Activated CD4-positive, alpha-beta T cell treated with anti-CD3 and anti-CD28 coated beads, Interleukin-2, amount 10 ng/mL, durations not matched to agents 24 days and 14 days (primary cell): ENCODE measurements at regions of chr4 and their contacts with region 1.

Region 1: DNA sequence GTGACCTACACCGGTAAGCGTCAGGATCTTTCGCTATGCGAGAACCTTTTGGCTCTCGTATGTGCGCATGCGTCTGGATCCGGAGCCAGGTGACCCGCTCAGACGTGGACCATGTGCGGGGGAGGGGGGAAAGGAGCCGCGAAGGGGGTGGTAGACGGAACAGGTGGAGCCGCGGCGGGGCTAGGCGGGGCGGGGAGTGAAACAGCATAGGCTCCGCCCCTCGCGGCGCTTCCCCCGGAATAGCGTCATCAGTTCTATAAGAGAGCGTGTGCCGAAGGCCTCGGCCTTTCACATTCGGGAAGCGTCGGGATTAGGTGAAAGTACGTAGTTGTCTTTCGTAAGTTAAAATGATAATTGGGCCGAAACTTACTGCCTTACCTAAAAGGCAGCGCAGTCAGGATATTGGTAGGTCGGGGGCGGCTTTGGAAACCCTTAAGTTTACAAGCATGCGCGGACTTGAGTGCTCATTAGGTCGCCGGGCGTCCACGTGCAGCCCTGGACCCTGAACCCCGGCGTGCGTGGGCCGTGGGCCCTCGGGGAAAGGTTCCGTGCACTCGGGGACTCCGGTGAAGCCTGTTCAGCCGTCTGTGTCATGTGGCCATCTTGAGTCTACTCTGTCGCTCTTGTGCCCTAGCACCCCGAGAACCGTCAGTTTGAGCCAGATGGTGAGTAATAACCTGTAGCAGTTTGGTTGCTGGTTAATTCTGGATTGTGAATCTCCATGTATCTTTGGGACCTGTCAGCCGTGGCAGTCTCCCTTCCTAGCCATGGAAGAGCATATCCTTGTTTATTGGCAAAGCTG is 74.1 kb downstream of the PRSS12 start:
- DNase-seq: peak; percentile 98
- H3K4me3 Mint-ChIP-seq: peak overlapping the region; percentile 88
- H3K27ac Mint-ChIP-seq: peak overlapping the region; percentile 93
- H3K4me1 Mint-ChIP-seq: peaks cover 34% of the 10 kb centered on the region
- H3K27me3 Mint-ChIP-seq: no peaks in the 10 kb centered on the region

Region 2: GRCh38 chr4:118249890-118250289 is 28.8 kb before region 1 on chr4:
- intact Hi-C with region 1: no loop called
- DNase-seq: no peak
- H3K4me3 Mint-ChIP-seq: no peak overlapping the region
- H3K27ac Mint-ChIP-seq: no peak overlapping the region
- H3K4me1 Mint-ChIP-seq: no peaks in the 10 kb centered on the region
- H3K27me3 Mint-ChIP-seq: no peaks in the 10 kb centered on the region

Region 3: GRCh38 chr4:118352843-118353533 is 74.3 kb after region 1 on chr4 and contains the start of gene PRSS12:
- intact Hi-C with region 1: loop called (anchors 2 kb)
- DNase-seq: peak; percentile 89
- H3K4me3 Mint-ChIP-seq: peak within 1 kb of the TSS; percentile 81
- H3K27ac Mint-ChIP-seq: no peak within 1 kb of the TSS
- H3K4me1 Mint-ChIP-seq: peaks cover 10% of the 10 kb centered on the region
- H3K27me3 Mint-ChIP-seq: peaks cover 67% of the 10 kb centered on the region
- total RNA-seq, gene PRSS12: not detected in 2 replicates

Region 4: DNA sequence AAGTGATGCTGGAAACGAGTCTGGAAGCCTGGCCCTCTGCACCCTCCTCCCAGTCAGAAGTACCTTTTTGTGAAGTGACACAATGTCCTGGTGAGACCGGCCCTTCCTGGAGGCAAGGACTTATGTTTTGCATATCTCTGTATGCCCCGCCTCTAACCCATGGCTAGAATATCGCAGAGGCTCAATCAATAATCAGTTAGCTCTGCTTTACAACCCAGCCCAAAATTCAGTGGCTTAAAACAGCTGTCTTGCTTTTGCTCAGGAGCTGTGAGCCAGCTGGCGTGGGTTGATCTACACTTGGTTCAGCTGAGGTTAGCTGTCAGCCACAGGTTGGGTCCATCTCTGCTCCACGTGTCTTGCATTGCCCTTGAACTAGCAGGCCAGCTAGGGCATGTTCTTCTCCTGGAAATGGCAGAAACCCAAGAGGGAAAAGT is 307.7 kb after region 1 on chr4:
- intact Hi-C with region 1: loop called (anchors 5 kb)
- DNase-seq: no peak
- H3K4me3 Mint-ChIP-seq: no peak overlapping the region
- H3K27ac Mint-ChIP-seq: no peak overlapping the region
- H3K4me1 Mint-ChIP-seq: peaks cover 9% of the 10 kb centered on the region
- H3K27me3 Mint-ChIP-seq: peaks cover 9% of the 10 kb centered on the region

Region 5: DNA sequence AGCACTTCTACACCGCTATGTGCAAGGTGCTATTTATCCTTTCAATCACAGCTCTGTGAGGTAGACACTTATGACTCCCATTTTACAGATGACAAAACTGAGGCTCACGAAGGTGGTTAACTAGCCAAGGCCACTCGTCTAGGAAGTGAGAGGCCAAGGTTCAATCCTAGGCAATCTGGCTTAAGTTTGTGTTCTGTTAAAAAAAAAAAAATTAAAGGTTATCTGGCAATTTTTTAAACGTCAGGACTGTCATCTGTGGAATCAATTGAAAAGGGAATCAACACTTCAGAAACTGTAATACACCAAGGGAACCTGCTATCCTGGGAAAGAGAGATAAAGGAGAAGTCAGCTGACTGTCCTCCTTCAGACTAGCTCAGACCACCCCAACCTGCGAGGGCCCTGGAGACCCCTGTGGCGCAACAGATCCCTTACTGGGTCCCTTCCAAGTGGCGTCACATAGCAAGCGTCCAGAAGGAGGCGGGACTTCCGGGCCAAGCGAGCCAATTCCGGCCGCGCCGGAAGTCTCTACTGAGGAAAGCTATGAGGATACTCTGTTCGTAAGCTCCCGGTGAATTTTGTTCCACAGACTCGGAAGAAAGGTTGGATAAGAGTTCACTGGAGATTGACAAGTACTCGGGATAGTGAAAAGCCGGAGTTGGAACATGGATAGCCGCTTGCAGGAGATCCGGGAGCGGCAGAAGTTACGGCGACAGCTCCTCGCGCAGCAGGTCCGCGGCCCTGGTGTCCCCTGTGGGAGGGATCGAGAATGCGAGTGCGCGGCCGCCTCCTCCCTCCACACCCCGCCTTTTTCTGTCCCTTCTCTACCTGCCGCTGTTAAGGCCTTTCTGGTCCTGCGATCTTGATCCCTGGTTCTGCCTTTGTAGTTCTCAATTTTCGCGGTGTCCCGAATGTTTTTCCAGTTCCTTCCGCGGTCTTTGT is 406.5 kb after region 1 on chr4 and contains the start of gene METTL14:
- intact Hi-C with region 1: loop called (anchors 2 kb)
- DNase-seq: peak; percentile 96
- H3K4me3 Mint-ChIP-seq: peak within 1 kb of the TSS; percentile 98
- H3K27ac Mint-ChIP-seq: peak within 1 kb of the TSS; percentile 95
- H3K4me1 Mint-ChIP-seq: peaks cover 11% of the 10 kb centered on the region
- H3K27me3 Mint-ChIP-seq: peaks cover 2% of the 10 kb centered on the region
- total RNA-seq, gene METTL14: 50.2 and 51.9 TPM in 2 replicates

Region 6: GRCh38 chr4:118835571-118836300 is 557.1 kb after region 1 on chr4 and contains the start of gene SEC24D:
- intact Hi-C with region 1: loop called (anchors 5 kb)
- DNase-seq: peak; percentile 97
- H3K4me3 Mint-ChIP-seq: peak within 1 kb of the TSS; percentile 94
- H3K27ac Mint-ChIP-seq: peak within 1 kb of the TSS; percentile 95
- H3K4me1 Mint-ChIP-seq: peaks cover 31% of the 10 kb centered on the region
- H3K27me3 Mint-ChIP-seq: peaks cover 6% of the 10 kb centered on the region
- total RNA-seq, gene SEC24D: 43.9 and 45.3 TPM in 2 replicates

Region 7: GRCh38 chr4:119300101-119300978 is 1021.7 kb after region 1 on chr4:
- intact Hi-C with region 1: loop called (anchors 5 kb)
- DNase-seq: peak; percentile 98
- H3K4me3 Mint-ChIP-seq: peak overlapping the region; percentile 85
- H3K27ac Mint-ChIP-seq: peak overlapping the region; percentile 99
- H3K4me1 Mint-ChIP-seq: peaks cover 35% of the 10 kb centered on the region
- H3K27me3 Mint-ChIP-seq: peaks cover 3% of the 10 kb centered on the region